ENCODE measurements at regions of chr21 and their contacts with region 1.

Region 1: GRCh38 chr21:31180256-31181081 is 142.2 kb upstream of the KRTAP19-8 start:
- DNase-seq: peak in 1 of 7 donors; percentile 28
- H3K4me3 ChIP-seq: no peak overlapping the region
- H3K27ac ChIP-seq: no peak overlapping the region
- H3K4me1 ChIP-seq: peaks cover 0 to 23% of the 10 kb centered on the region in 2 donors
- H3K27me3 ChIP-seq: no peaks in the 10 kb centered on the region
- CTCF ChIP-seq: peak; percentile 28 to 61 (median 49)
- POLR2A ChIP-seq: no peak

Region 2: GRCh38 chr21:31098576-31099005 is 81.9 kb before region 1 on chr21:
- intact Hi-C with region 1: loop called (anchors 5 kb)
- DNase-seq: peak; percentile 38 to 90 (median 62)
- H3K4me3 ChIP-seq: no peak overlapping the region
- H3K27ac ChIP-seq: no peak overlapping the region
- H3K4me1 ChIP-seq: no peaks in the 10 kb centered on the region
- H3K27me3 ChIP-seq: no peaks in the 10 kb centered on the region
- CTCF ChIP-seq: peak; percentile 60 to 82 (median 75)
- POLR2A ChIP-seq: no peak

Region 3: GRCh38 chr21:31103571-31104272 is 76.7 kb before region 1 on chr21:
- intact Hi-C with region 1: loop called (anchors 5 kb)
- DNase-seq: no peak
- H3K4me3 ChIP-seq: no peak overlapping the region
- H3K27ac ChIP-seq: no peak overlapping the region
- H3K4me1 ChIP-seq: no peaks in the 10 kb centered on the region
- H3K27me3 ChIP-seq: no peaks in the 10 kb centered on the region
- CTCF ChIP-seq: no peak
- POLR2A ChIP-seq: no peak

Region 4: DNA sequence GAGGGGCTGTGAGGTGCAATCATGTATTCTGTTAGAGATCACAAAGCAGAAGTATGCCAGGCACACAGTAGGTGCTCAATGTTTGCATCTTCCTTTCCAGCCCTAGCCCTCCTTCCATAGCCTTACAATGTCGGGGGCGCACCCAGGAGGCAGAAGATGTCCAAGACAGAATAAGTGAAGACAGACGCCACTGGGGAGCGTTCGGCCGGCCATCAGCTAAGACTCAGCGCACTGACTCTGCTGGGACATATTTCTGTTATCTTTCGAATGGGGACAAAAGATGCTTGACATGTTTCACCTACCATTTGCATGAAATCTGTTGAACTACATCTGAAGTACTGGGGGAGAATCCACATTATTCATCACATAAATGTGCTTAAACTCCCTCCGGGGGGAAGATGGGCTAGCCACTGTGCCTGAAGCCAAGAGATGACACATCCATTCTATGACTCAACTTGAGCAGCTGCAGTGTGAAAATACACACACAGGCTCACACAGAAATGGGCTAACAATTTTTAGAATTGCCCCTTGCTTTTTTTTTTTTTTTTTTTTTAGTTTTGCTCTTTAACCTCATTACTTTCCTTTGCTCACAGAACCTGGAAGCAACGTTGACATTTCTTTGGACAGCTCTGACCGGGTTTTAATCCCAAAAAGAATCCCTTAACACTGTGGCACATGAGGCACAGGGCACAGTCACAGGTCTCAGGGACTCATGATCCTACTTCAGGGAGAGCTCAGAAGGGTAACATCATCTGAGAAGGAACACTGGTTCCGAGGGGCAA is 155.7 kb after region 1 on chr21:
- intact Hi-C with region 1: no loop called
- DNase-seq: no peak
- H3K4me3 ChIP-seq: no peak overlapping the region
- H3K27ac ChIP-seq: no peak overlapping the region
- H3K4me1 ChIP-seq: no peaks in the 10 kb centered on the region
- H3K27me3 ChIP-seq: no peaks in the 10 kb centered on the region
- CTCF ChIP-seq: no peak
- POLR2A ChIP-seq: no peak

Measured in adrenal gland (tissue), 19 donors.